Ovary (tissue), 10 donors: ENCODE measurements at regions of chr11 and their contacts with region 1.

Region 1: DNA sequence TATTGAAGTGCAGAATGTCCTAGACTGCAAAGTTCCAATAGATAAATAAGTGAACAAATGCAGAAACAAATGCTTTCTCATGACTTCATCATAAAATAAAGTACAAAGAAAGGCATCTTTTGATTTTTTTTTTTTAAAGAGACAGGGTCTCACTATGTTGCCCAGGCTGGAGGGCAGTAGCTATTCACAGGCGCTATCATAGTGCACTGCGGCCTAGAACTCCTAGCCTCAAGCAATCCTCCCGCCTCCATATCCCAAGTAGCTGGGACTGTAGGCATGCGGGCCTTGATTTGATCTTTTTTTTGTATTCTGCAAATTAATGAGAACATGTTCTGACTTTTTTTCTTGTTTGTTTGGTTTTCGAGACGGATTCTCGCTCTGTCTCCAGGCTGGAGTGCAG is 2.4 kb downstream of the ARCN1 start:
- DNase-seq: no peak
- H3K4me3 ChIP-seq: no peak overlapping the region
- H3K27ac ChIP-seq: no peak overlapping the region
- H3K4me1 ChIP-seq: peaks cover 9% of the 10 kb centered on the region
- H3K27me3 ChIP-seq: no peaks in the 10 kb centered on the region
- CTCF ChIP-seq: no peak
- EP300 ChIP-seq: no peak
- POLR2A ChIP-seq: no peak

Region 2: GRCh38 chr11:118610804-118611795 is 36.5 kb after region 1 on chr11:
- intact Hi-C with region 1: loop called in 2 of 4 experiments (anchors 2 to 5 kb)
- DNase-seq: peak; percentile 78 to 89 (median 86)
- H3K4me3 ChIP-seq: peak overlapping the region; percentile 76
- H3K27ac ChIP-seq: peak overlapping the region; percentile 64 to 71
- H3K4me1 ChIP-seq: peaks cover 11% of the 10 kb centered on the region
- H3K27me3 ChIP-seq: no peaks in the 10 kb centered on the region
- CTCF ChIP-seq: peak; percentile 62 to 87 (median 78)
- EP300 ChIP-seq: no peak
- POLR2A ChIP-seq: no peak

Region 3: DNA sequence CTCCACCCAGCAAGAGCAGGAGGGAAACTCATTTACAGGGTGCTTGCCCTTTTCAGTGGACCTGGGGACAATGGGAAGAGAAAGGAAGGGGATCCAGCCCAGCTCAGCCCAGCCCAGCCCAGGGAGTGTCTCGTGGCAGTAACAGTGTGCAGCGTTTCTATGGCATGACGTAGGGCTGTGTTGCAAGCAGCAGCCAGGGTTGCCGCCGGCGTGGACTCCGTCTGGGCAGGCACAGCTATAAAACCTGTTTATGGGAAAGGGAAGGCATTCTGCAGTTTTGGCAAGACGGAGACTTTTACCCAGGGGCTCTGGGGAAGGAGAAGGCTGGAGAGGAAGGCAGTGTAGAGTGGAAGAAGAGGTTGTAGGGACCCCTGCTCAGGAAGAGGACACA is 1554.1 kb after region 1 on chr11:
- intact Hi-C with region 1: no loop called
- DNase-seq: peak in 2 of 5 donors; percentile 7 to 31
- H3K4me3 ChIP-seq: no peak overlapping the region
- H3K27ac ChIP-seq: no peak overlapping the region
- H3K4me1 ChIP-seq: no peaks in the 10 kb centered on the region
- H3K27me3 ChIP-seq: no peaks in the 10 kb centered on the region
- CTCF ChIP-seq: no peak
- EP300 ChIP-seq: no peak
- POLR2A ChIP-seq: no peak